Cardiac septum (tissue), 1 donor: ENCODE measurements at regions of chr5 and their contacts with region 1.

Region 1: DNA sequence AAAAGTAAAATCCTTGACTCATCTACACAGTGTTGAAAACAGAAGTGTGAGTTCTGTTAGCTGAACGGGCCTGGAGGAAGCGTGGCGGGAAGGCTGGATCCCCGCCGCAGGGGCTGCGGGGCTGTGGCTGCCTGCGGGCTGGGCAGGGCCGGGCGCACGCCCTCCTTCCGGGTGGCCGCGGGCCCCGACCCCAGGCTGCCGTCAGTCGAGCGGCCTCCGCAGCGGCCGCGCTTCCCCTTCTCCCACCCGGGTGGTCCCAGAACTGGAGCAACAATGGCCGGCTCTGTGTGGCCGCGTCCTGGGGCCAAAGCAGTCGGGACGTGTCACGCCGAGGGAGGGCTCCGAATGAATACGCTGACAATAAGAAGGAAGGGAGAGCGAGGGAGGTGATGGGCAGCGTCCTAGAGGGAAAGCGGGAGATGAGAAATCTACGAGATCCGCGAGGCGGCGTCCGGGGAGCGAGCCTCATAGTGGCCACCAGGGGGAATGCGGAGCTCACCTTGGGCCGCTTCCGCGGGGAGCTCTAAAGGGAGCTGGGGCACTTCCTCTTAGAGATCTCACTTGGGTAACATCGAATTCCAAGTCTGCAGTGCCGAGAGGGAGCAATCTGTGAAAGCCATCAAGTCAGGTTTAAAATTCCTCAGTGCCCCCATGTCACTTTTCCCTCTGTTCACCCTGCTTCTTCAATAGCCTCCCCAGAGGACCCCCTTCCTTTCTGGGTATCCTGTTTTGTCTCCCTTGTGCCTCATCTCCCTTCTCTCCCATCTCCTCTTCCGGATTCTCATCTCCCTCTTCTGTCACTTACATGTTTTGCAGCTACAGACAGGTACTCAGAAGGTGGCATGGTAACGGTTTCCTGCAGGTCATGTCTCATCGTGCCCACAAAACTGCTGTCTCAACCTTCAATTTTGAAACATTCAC is 83.9 kb downstream of the SLC1A3 start:
- DNase-seq: peak; percentile 93

Region 2: DNA sequence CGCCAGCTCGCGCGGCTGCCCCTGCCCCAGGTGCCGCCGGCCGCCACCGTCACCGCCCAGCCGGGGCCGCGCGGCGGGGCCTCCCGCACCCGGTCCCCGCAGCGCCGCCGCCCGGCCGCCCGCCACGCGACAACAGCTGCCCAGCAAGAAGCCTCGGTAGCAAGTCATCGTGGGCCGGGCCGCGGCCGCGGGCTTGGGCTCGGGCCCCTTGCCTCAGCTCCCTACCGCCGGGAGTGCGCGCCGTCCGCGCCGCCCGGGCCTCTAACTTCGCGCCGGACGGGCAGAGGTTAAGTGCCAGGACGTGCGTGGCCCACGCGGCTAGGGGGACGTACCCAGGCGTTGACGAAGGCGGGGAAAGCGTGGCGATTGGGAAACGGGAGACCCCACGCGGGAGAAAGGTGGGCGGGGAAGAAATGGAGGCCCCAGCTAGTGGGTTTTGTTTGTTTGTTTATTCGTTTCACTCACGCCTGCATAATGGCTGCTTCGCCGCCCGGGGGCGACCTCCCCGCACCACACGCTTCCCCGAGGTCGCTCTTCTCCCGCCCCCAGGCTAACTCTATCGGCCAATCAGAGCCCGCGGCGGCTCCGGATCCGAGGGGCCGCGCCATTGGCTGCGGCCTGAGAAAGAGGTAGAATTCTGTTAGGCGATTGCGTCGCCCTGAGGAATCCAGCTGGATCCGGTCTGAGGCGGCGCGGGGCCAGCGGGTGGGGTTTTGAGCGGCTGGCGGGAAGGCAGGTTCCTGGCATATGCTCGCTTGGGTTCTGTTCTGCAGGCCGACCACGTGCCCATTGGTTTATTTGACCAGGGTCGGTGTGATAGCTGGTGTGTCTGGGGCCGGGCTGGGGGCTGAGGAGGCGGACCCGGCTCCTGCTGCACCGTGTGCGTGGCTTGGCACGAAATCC is 448.4 kb before region 1 on chr5 and contains the start of gene NADK2:
- intact Hi-C with region 1: loop called (anchors 5 kb)
- DNase-seq: peak; percentile 97
- total RNA-seq, gene NADK2: 34.6 TPM

Region 3: GRCh38 chr5:36311956-36312355 is 378.3 kb before region 1 on chr5:
- intact Hi-C with region 1: no loop called
- DNase-seq: no peak

Region 4: DNA sequence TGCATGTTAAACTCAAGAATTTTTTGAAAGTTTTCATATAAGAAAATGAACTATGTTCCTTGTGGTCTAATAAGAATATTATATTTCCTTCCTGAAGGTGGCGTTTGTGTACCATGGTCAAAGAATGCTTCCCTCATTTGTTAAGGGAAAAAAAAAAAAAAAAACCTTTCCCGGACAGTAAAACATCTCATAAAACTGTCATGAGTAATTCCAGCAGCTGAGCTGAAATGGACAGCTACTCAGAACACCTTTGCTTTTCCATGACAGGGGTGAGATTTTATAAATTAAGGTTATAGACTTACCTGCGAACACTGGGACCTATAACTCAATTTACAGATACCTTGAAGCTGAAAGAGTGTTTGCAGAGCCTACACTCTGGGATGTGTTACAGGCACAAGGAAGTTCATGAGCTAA is 275.4 kb before region 1 on chr5:
- intact Hi-C with region 1: loop called (anchors 1 kb)
- DNase-seq: no peak

Region 5: DNA sequence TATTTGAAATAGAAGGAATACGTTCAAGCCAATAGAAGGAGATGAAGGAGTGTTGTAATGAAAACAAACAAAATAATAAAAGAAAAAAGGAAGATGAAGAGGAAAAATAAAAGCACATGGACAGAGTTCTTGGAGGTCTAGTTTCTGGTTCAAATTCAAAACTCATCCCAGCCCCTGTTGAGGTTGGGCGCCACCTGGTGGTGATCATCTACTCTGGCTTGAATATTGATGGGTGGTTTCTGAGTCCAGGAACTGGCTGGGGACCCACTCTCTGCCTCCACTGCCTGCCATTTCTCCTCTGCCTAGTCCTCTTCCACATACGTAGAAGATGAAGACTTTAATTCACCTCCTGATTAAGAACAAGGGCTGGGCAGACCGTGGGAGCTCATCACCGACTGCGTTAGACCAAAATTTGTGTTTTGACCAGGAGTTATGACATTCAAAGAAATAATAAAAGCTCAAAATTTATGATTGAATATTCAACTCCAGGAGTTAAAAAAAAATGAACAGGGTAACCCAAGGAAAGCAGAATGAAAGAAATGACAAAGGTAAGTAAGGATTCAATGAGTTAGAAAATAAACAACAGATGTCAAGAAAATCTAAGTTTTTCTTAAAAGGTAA is 182.9 kb before region 1 on chr5:
- intact Hi-C with region 1: loop called (anchors 5 kb)
- DNase-seq: peak; percentile 86

Region 6: DNA sequence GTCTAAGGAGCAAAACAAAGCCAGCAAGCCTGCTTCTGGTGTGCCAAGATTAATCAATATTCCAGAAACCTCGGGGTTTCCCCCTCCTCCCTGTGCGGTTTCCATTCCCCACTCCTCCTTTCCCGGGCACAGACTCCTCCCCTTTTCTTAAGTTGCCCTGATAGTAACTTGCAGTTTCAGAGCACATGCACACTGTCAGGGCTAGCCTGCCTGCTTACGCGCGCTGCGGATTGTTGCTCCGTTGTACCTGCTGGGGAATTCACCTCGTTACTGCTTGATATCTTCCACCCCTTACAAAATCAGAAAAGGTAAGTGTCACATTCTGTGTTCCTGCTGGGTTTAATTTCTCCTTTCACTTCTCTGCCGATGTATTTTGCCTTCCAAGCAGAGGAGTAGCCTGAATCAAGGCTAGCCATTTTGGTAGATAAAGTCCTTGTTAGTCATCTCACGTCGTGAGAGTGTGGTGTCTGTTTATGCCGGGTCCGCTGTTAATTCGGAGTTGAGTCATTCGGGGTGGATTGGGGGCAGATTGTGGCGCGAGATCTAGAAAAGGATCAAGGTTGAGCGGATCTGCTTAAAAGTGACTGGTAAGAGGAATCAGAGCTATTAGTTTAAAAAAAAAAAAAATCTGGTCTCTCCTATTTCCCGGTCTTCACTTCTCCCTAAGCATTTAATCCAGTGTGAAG is 83.7 kb before region 1 on chr5 and contains the start of gene SLC1A3:
- intact Hi-C with region 1: loop called (anchors 2 kb)
- DNase-seq: no peak
- total RNA-seq, gene SLC1A3: 53.0 TPM

Region 7: GRCh38 chr5:36658016-36658415 is 32.3 kb before region 1 on chr5:
- intact Hi-C with region 1: loop called (anchors 2 kb)
- DNase-seq: no peak

Region 8: DNA sequence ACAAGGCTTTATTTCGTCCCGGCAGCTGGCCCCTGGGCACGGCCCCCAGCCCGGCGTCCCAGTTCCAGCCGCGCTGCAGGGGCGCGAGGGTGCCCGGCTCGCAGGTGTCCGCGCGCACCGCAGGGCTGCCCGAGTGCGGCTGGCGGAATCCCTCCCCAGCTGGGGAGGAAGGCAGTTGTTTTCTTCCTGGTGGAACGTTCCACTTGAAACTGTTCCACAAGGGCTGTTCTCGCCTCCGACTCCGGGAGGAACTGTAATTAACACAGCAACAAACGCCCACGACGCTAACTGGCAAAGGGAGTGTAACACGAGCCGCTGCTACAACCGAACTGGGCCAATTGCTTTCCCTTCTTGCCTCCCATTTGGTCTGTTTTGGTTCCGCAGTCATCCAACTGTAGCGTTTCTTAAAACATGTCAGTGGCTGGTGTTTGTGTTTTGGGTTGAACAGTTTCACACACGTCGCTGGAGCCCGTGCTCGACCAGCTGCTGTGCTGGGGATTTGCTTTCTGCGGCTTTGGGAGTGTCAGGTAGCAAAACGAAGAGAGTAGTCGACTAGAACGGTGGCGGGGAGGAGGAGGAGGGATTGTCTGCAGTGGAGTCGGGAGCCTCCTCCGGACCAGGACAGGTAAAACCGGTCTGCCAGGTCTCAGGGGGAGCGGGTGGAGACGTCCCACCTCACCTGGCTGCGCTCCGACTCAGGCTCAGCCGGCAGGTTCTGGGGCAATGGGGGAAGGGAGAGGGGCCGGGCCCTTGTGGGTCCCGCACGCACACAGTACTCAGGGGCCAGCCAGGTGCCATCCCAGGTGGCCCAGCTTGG is 54.7 kb after region 1 on chr5:
- intact Hi-C with region 1: no loop called
- DNase-seq: no peak